Heart left ventricle (tissue), 16 donors: ENCODE measurements at regions of chr10 and their contacts with region 1.

Region 1: DNA sequence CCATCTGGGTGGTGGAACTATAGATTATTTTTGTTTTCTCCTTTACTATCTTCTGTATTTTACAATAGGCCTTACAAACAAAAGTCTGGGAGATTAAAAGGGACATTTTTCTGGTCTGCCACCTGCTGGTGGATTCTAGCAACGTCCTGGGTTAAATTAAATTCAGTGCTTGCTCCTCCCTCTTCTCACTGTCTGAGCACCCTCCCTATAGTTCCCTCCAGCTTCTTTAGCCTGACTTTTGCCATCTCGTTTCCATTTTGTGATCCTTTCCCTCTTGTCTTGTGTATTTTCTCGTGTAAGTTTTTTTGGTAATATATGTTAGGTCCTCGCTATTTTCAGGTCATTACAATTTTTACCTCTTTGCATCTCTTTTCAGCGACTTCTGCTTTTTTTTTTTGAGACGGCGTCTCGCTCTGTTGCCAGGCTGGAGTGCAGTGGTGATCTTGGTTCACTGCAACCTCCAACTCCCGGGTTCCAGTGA is 16.1 kb downstream of the ANKRD16 start:
- DNase-seq: peak in 4 of 5 donors; percentile 36 to 64 (median 42)
- ATAC-seq: peak; percentile 56 to 85 (median 75)
- H3K4me3 ChIP-seq: peak overlapping the region in 1 of 12 donors; percentile 24
- H3K27ac ChIP-seq: no peak overlapping the region
- H3K4me1 ChIP-seq: peaks cover 0 to 3% (median 0%) of the 10 kb centered on the region in 12 donors
- H3K27me3 ChIP-seq: no peaks in the 10 kb centered on the region
- CTCF ChIP-seq: peak; percentile 62 to 84 (median 78)
- POLR2A ChIP-seq: no peak

Region 2: GRCh38 chr10:5446390-5446926 is 427.1 kb before region 1 on chr10:
- intact Hi-C with region 1: loop called in 9 of 10 experiments (anchors 5 to 10 kb)
- DNase-seq: peak; percentile 89 to 93 (median 91)
- ATAC-seq: peak; percentile 97 to 99 (median 98)
- H3K4me3 ChIP-seq: peak overlapping the region; percentile 2 to 65 (median 54)
- H3K27ac ChIP-seq: peak overlapping the region in 10 of 12 donors; percentile 7 to 74 (median 60)
- H3K4me1 ChIP-seq: peaks cover 0 to 39% (median 7%) of the 10 kb centered on the region in 12 donors
- H3K27me3 ChIP-seq: no peaks in the 10 kb centered on the region
- CTCF ChIP-seq: no peak
- POLR2A ChIP-seq: peak in 1 of 2 donors; percentile 85

Region 3: GRCh38 chr10:5629303-5630111 is 244.0 kb before region 1 on chr10:
- intact Hi-C with region 1: loop called in 6 of 10 experiments (anchors 2 to 10 kb)
- DNase-seq: peak; percentile 71 to 87 (median 75)
- ATAC-seq: peak; percentile 70 to 85 (median 83)
- H3K4me3 ChIP-seq: peak overlapping the region in 1 of 12 donors; percentile 48
- H3K27ac ChIP-seq: peak overlapping the region in 8 of 12 donors; percentile 15 to 77 (median 44)
- H3K4me1 ChIP-seq: peaks cover 0 to 34% (median 18%) of the 10 kb centered on the region in 12 donors
- H3K27me3 ChIP-seq: no peaks in the 10 kb centered on the region
- CTCF ChIP-seq: peak; percentile 79 to 97 (median 91)
- POLR2A ChIP-seq: no peak

Region 4: GRCh38 chr10:5684318-5684970 is 189.1 kb before region 1 on chr10 and contains the start of gene TASOR2:
- intact Hi-C with region 1: loop called in 9 of 10 experiments (anchors 2 to 10 kb)
- DNase-seq: peak; percentile 98 to 100 (median 99)
- ATAC-seq: peak; percentile 98 to 99 (median 99)
- H3K4me3 ChIP-seq: peak within 1 kb of the TSS; percentile 63 to 100 (median 91)
- H3K27ac ChIP-seq: peak within 1 kb of the TSS; percentile 78 to 95 (median 92)
- H3K4me1 ChIP-seq: peaks cover 0 to 27% (median 19%) of the 10 kb centered on the region in 12 donors
- H3K27me3 ChIP-seq: peaks cover 0 to 6% (median 0%) of the 10 kb centered on the region in 9 donors
- CTCF ChIP-seq: no peak
- POLR2A ChIP-seq: peak in 1 of 2 donors; percentile 55
- total RNA-seq, gene TASOR2: 28.7 to 47.2 (median 35.5) TPM

Region 5: GRCh38 chr10:5813287-5814109 is 60.1 kb before region 1 on chr10 and contains the start of gene GDI2:
- intact Hi-C with region 1: loop called in 6 of 10 experiments (anchors 2 to 10 kb)
- DNase-seq: peak; percentile 96 to 97 (median 97)
- ATAC-seq: peak; percentile 98 to 99 (median 99)
- H3K4me3 ChIP-seq: peak within 1 kb of the TSS; percentile 47 to 99 (median 94)
- H3K27ac ChIP-seq: peak within 1 kb of the TSS; percentile 91 to 100 (median 98)
- H3K4me1 ChIP-seq: peaks cover 0 to 50% (median 37%) of the 10 kb centered on the region in 12 donors
- H3K27me3 ChIP-seq: no peaks in the 10 kb centered on the region
- CTCF ChIP-seq: peak in 1 of 12 donors; percentile 4
- POLR2A ChIP-seq: peak; percentile 34 to 89
- total RNA-seq, gene GDI2: 92.0 to 161 (median 117) TPM